Activated naive CD4-positive, alpha-beta T cell treated with anti-CD3 and anti-CD28 coated beads for 36 hours (primary cell): ENCODE measurements at regions of chr7 and their contacts with region 1.

Region 1: DNA sequence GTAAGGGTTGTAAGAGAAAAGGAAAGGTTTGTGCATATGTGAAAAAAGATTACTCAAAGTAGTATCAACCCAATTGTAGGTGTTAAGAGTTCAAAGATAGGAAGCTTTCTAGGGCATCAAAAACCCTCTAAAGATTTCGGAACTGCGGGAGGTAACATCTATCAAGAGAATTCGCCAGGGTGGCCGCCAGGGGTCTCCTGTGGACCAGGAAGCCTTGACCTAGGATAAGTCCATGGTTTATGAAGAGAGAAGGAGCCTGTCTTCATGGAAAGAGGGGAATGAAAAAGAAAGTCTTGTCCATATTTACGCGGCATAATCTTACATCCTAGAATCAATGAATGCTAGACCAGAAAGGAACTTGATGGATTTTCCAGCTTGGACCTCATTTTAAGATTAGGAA is 140.7 kb upstream of the CALCR start:
- DNase-seq: peak; percentile 49
- H3K4me3 Mint-ChIP-seq: no peak overlapping the region
- H3K27ac Mint-ChIP-seq: no peak overlapping the region
- H3K4me1 Mint-ChIP-seq: no peaks in the 10 kb centered on the region
- H3K27me3 Mint-ChIP-seq: peaks cover 9% of the 10 kb centered on the region

Region 2: DNA sequence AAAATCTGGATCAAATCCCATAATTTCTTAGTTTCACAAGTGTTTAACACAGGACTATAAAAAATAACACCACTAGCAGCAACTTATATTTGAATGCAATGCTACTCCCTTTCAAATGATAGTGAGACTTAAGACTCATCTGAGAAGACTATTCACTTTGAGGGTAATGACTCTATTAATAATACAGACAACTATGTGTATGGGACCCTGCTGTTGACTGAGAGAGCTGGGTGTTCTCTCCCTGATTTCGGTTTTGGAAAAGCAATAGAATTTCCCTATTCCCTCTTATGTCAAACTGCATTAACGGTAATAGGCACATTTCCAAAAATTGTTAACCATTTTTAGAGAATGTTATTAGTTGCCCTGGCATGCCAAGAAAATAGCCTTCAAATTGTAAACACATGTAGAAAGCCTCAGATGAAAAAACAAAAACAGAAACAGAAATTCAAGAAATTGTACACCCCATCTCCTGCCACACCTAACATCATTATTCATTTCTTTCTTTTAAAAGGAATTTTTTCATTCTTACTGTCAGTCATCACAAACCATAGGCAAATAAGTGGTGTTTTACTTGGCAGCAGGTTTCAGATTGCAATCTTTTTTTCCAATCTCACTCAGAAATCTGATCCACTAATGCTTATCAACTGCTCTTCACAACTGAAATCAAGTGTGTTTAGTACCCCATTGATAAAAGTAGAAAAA is 21.6 kb after region 1 on chr7:
- CTCF ChIA-PET with region 1: no interaction called
- intact Hi-C with region 1: no loop called
- DNase-seq: no peak
- H3K4me3 Mint-ChIP-seq: no peak overlapping the region
- H3K27ac Mint-ChIP-seq: no peak overlapping the region
- H3K4me1 Mint-ChIP-seq: no peaks in the 10 kb centered on the region
- H3K27me3 Mint-ChIP-seq: no peaks in the 10 kb centered on the region

Region 3: GRCh38 chr7:94436018-94436604 is 720.9 kb after region 1 on chr7:
- CTCF ChIA-PET with region 1: no interaction called
- intact Hi-C with region 1: loop called (anchors 1 kb)
- DNase-seq: peak; percentile 68
- H3K4me3 Mint-ChIP-seq: no peak overlapping the region
- H3K27ac Mint-ChIP-seq: no peak overlapping the region
- H3K4me1 Mint-ChIP-seq: no peaks in the 10 kb centered on the region
- H3K27me3 Mint-ChIP-seq: peaks cover 20% of the 10 kb centered on the region